ENCODE measurements at regions of chrX and their contacts with region 1.

Region 1: GRCh38 chrX:17944833-17945497 is 83.9 kb upstream of the RAI2 start:
- DNase-seq: no peak
- ATAC-seq: no peak
- H3K4me3 ChIP-seq: no peak overlapping the region
- H3K27ac ChIP-seq: no peak overlapping the region
- H3K4me1 ChIP-seq: no peaks in the 10 kb centered on the region
- H3K27me3 ChIP-seq: peaks cover 0 to under 1% (median 0%) of the 10 kb centered on the region in 7 donors
- CTCF ChIP-seq: peak in 8 of 9 donors; percentile 9 to 53 (median 32)

Region 2: DNA sequence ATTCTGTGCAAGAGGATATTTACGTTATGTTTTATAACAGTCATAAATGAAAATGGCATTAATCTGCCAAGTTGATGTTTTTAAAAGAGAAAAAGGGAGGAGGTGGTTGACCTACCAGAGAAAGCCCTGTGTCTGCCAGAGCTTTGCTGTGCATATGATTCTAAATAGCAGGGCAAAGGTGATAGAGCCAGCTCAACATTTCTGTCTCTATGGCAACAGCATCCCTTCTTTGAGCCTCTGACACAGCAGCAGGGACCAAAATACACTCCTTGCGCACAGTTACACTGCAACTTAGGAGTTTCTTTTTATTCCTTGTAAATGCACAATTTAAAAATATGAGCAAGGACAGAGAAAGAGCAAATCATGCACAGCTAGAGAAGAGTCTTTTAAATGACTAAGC is 49.5 kb after region 1 on chrX:
- intact Hi-C with region 1: loop called in 1 of 10 experiments (anchors 5 kb)
- DNase-seq: no peak
- ATAC-seq: no peak
- H3K4me3 ChIP-seq: no peak overlapping the region
- H3K27ac ChIP-seq: no peak overlapping the region
- H3K4me1 ChIP-seq: no peaks in the 10 kb centered on the region
- H3K27me3 ChIP-seq: peaks cover 0 to 33% (median 0%) of the 10 kb centered on the region in 7 donors
- CTCF ChIP-seq: no peak

Region 3: GRCh38 chrX:18194688-18195087 is 249.7 kb after region 1 on chrX:
- intact Hi-C with region 1: loop called in 1 of 10 experiments (anchors 10 kb)
- DNase-seq: no peak
- ATAC-seq: no peak
- H3K4me3 ChIP-seq: no peak overlapping the region
- H3K27ac ChIP-seq: no peak overlapping the region
- H3K4me1 ChIP-seq: no peaks in the 10 kb centered on the region
- H3K27me3 ChIP-seq: peaks cover 0 to 4% (median 0%) of the 10 kb centered on the region in 7 donors
- CTCF ChIP-seq: no peak

Region 4: GRCh38 chrX:18220786-18221185 is 275.8 kb after region 1 on chrX and contains the start of gene BEND2:
- intact Hi-C with region 1: no loop called
- DNase-seq: no peak
- ATAC-seq: no peak
- H3K4me3 ChIP-seq: no peak within 1 kb of the TSS
- H3K27ac ChIP-seq: no peak within 1 kb of the TSS
- H3K4me1 ChIP-seq: no peaks in the 10 kb centered on the region
- H3K27me3 ChIP-seq: no peaks in the 10 kb centered on the region
- CTCF ChIP-seq: no peak
- total RNA-seq, gene BEND2: 0.08 TPM in 1 of 10 donors, not detected in the others

Measured in heart right ventricle (tissue), 16 donors.